ENCODE measurements at regions of chr1 and their contacts with region 1.

Region 1: DNA sequence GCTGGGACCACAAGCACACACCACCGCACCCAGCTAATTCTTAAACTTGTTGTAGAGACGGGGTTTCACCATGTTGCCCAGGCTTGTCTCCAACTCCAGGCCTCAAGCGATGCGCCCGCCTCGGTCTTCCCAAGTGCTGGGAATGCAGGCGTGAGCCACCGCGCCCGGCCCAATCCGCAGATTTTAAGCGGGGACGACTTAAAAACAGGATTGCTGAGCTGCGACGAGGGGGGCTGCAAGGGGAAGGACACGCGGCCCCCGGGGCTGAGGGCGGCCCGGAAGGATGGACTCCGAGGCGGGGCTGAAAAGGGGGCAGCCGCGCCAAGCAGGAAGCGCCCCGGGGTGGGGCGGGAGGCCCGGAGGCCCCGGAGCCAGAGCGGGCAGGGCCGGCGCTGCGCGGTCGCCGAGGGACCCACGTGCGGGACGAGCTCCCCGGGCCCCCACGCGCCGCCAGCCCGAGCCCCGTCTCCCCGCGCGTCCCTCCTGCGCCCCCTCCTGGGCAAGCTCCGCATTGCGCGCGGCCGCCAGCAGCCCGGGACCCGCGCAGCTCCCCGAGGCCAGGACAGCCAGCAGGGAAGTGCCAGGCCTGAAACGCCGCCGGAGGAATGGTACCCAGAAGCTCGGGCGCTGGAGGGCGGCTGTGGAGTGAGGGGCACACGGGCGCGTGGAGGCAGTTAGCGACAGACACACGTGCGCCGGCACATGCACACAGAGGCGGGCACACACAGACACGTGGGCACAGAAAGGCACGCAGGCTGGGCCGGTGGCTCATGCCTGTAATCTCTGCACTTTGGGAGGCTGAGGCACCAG is 5.5 kb upstream of the PRKCZ start:
- DNase-seq: peak; percentile 65 to 94 (median 78)
- ATAC-seq: peak; percentile 93
- H3K4me3 ChIP-seq: peak overlapping the region; percentile 35
- H3K4me3 Mint-ChIP-seq: peak overlapping the region in 8 of 10 donors; percentile 33 to 78 (median 52)
- H3K27ac ChIP-seq: no peak overlapping the region
- H3K27ac Mint-ChIP-seq: peak overlapping the region in 1 of 9 donors; percentile 3
- H3K4me1 ChIP-seq: peaks cover 7 to 14% of the 10 kb centered on the region in 2 donors
- H3K4me1 Mint-ChIP-seq: peaks cover 10 to 28% (median 22%) of the 10 kb centered on the region in 7 donors
- H3K27me3 ChIP-seq: no peaks in the 10 kb centered on the region
- H3K27me3 Mint-ChIP-seq: peaks cover 0 to 35% (median 5%) of the 10 kb centered on the region in 5 donors

Region 2: DNA sequence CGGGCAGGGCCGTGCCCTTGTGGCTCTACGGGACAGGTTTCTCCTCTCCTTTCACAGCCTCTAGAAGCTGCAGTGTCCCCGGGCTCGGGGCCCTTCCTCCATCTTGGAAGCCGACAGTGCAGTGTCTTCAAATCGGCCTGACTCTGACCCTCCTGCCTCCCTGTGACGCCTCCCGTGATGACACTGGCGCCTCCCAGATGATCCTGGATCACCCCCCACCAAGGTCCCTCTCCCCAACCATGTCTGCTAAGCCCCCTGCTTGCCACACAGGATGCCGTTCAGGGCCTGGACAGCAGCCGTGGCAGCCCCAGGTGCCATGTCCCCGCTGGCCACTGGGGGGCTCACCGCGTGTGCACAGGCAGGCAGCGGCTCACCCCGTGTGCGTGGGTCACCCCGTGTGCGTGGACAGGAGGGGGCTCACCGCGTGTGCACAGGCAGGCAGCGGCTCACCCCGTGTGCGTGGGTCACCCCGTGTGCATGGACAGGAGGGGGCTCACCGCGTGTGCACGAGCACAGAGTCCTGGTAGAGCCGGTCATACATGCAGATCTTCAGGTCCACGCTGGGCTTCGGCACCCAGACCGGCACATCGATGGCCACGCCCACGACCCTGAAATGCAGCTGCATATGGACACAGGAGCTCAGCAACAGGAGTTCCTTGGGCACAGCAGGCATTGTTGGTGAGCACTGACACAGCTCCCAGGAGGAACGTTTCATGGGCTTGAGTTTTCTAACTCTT is 100.7 kb before region 1 on chr1:
- CTCF ChIA-PET with region 1: interaction called, 18 read pairs
- POLR2A ChIA-PET with region 1: interaction called, 3 read pairs
- intact Hi-C with region 1: loop called in 1 of 2 experiments (anchors 5 kb)
- DNase-seq: peak in 8 of 9 donors; percentile 42 to 65 (median 49)
- ATAC-seq: peak; percentile 91
- H3K4me3 ChIP-seq: no peak overlapping the region
- H3K4me3 Mint-ChIP-seq: peak overlapping the region in 4 of 10 donors; percentile 6 to 65 (median 38)
- H3K27ac ChIP-seq: no peak overlapping the region
- H3K27ac Mint-ChIP-seq: no peak overlapping the region
- H3K4me1 ChIP-seq: peaks cover 3 to 6% of the 10 kb centered on the region in 2 donors
- H3K4me1 Mint-ChIP-seq: peaks cover 0 to 7% (median 3%) of the 10 kb centered on the region in 7 donors
- H3K27me3 ChIP-seq: no peaks in the 10 kb centered on the region
- H3K27me3 Mint-ChIP-seq: no peaks in the 10 kb centered on the region

Region 3: GRCh38 chr1:1959840-1960479 is 84.8 kb before region 1 on chr1:
- CTCF ChIA-PET with region 1: interaction called, 5 read pairs
- POLR2A ChIA-PET with region 1: no interaction called
- intact Hi-C with region 1: loop called (anchors 1 kb)
- DNase-seq: peak; percentile 30 to 74 (median 56)
- ATAC-seq: peak; percentile 73
- H3K4me3 ChIP-seq: no peak overlapping the region
- H3K4me3 Mint-ChIP-seq: no peak overlapping the region
- H3K27ac ChIP-seq: no peak overlapping the region
- H3K27ac Mint-ChIP-seq: no peak overlapping the region
- H3K4me1 ChIP-seq: no peaks in the 10 kb centered on the region
- H3K4me1 Mint-ChIP-seq: peaks cover 0 to 4% (median 0%) of the 10 kb centered on the region in 7 donors
- H3K27me3 ChIP-seq: no peaks in the 10 kb centered on the region
- H3K27me3 Mint-ChIP-seq: peaks cover 6 to 35% (median 13%) of the 10 kb centered on the region in 5 donors